Naive thymus-derived CD4-positive, alpha-beta T cell (primary cell): ENCODE measurements at regions of chr21 and their contacts with region 1.

Region 1: DNA sequence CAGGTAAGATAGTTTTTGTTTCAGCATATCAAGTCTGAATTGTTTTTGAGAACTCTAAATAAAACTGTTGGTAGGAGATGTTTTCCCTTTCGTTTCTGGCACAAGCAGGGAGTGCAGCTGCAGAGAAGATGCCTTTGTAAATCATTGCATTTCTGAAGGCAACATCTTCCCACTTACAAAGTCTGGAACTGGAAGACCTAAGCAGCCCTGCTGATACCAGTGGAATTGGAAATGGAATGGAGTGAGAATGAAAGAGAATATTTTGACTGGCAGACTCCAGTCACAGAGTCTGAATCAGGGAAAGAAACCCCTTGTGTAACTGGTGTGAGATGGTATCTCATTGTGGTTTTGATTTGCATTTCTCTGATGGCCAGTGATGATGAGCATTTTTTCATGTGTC is 815.6 kb downstream of the LTN1 start:
- DNase-seq: no peak
- ATAC-seq: no peak
- H3K4me3 ChIP-seq: no peak overlapping the region
- H3K4me3 Mint-ChIP-seq: no peak overlapping the region
- H3K27ac ChIP-seq: no peak overlapping the region
- H3K27ac Mint-ChIP-seq: no peak overlapping the region
- H3K4me1 ChIP-seq: no peaks in the 10 kb centered on the region
- H3K4me1 Mint-ChIP-seq: no peaks in the 10 kb centered on the region
- H3K27me3 ChIP-seq: no peaks in the 10 kb centered on the region
- H3K27me3 Mint-ChIP-seq: no peaks in the 10 kb centered on the region

Region 2: DNA sequence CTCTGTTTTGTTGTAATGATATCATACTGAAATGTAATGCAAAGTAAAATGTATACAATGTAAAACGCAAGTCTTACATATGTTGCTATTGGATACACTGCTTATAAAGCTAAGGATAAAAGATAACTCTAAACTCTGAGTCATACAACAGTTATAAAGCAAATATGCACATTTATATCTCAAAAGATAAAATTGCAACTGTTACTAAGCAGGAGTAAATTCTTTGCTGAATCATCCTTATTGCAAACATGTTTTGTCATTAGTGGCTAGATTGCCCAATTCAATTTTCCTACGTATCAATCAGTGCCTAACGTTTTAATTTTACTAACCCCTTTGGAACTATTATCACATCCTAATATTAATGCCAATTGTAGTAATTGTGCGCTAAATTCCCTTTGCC is 52.7 kb after region 1 on chr21:
- CTCF ChIA-PET with region 1: no interaction called
- POLR2A ChIA-PET with region 1: no interaction called
- intact Hi-C with region 1: loop called in 1 of 2 experiments (anchors 10 kb)
- DNase-seq: no peak
- ATAC-seq: no peak
- H3K4me3 ChIP-seq: no peak overlapping the region
- H3K4me3 Mint-ChIP-seq: no peak overlapping the region
- H3K27ac ChIP-seq: no peak overlapping the region
- H3K27ac Mint-ChIP-seq: no peak overlapping the region
- H3K4me1 ChIP-seq: no peaks in the 10 kb centered on the region
- H3K4me1 Mint-ChIP-seq: peaks cover 0 to 1% (median 0%) of the 10 kb centered on the region in 7 donors
- H3K27me3 ChIP-seq: no peaks in the 10 kb centered on the region
- H3K27me3 Mint-ChIP-seq: peaks cover 0 to 12% (median 6%) of the 10 kb centered on the region in 5 donors